ENCODE measurements at regions of chr17 and their contacts with region 1.

Region 1: GRCh38 chr17:42571435-42572225 is 4.7 kb downstream of the MLX start:
- DNase-seq: no peak
- ATAC-seq: no peak
- H3K4me3 ChIP-seq: no peak overlapping the region
- H3K27ac ChIP-seq: no peak overlapping the region
- H3K4me1 ChIP-seq: no peaks in the 10 kb centered on the region
- H3K27me3 ChIP-seq: no peaks in the 10 kb centered on the region

Region 2: DNA sequence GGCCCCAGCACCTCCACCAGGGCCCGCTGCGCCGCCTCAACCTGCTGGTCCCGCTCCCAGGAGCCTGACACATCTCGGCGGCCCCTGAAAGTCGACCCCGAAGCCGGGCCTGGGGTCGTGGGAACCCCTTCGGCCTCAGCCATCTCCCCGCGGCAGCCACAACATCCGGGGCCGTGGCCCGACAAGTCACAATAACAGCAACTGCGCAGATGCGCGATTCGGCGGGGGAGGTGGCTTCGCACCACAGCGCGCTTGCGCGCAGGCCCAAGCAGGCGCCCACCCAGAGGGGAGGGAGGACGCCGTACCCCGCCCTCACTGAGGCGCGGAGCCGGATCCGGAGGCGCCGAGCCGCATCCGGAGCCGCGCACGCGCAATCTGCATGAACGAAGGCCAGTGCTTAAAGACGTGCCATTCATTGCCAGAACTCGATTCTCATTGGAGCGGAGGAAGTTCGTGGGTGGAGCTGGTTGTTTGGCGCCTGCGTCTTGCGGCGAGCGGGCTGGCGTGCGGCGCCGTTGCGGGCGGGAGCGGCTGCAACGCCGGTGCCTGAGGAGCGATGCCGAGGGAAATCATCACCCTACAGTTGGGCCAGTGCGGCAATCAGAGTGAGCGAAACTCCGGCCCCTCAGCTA is 37.7 kb after region 1 on chr17 and contains the starts of genes RETREG3 and TUBG1:
- intact Hi-C with region 1: loop called in 1 of 4 experiments (anchors 5 kb)
- DNase-seq: peak; percentile 99 to 100 (median 100)
- ATAC-seq: peak; percentile 97 to 98
- H3K4me3 ChIP-seq: peak within 1 kb of the TSS; percentile 66
- H3K27ac ChIP-seq: peak within 1 kb of the TSS; percentile 74
- H3K4me1 ChIP-seq: peaks cover 5% of the 10 kb centered on the region
- H3K27me3 ChIP-seq: no peaks in the 10 kb centered on the region
- total RNA-seq, gene RETREG3: 23.9 to 27.0 (median 25.5) TPM
- total RNA-seq, gene TUBG1: 34.3 to 60.7 (median 46.0) TPM